Posterior vena cava (tissue), 2 donors: ENCODE measurements at regions of chr2 and their contacts with region 1.

Region 1: GRCh38 chr2:134601264-134601663 is 117.5 kb downstream of the TMEM163 start:
- DNase-seq: no peak

Region 2: DNA sequence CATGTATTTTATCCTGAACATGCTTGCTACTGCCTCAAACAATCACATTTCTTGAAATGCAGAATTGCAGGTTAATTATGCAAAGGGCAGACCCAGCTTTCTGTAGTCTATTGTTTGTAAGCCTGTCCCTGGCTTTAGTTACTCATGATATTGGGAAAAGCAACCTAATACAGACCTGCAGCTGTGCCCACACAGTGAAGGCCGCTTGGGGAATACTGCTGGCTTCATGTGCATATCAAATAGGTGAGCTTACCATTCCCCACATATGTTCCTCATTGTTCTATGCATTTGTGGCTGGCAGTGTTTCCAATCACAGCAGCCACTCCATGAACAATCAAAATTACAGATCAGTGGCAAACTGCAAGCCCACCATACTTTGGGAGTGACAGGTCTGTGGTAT is 68.7 kb before region 1 on chr2:
- intact Hi-C with region 1: loop called in 1 of 2 experiments (anchors 2 kb)
- DNase-seq: no peak

Region 3: DNA sequence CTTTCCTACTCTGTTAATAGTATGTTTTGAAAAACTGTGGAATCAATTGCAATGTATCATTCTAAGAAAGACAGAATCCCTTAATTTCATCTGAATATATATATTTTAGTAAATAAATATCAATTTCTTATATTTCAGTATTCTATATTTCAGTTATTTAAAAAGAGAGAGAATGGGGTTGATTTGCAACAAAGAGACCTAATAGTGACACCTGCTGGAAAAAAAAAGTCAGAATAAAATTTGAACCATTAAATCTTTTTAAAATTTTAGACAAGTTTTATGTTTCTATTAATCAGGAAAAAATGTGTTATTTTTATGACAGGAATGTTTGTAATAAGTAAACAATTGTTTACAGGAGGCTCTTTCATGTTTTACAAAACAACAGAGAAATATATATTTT is 296.7 kb after region 1 on chr2:
- intact Hi-C with region 1: no loop called
- DNase-seq: no peak